CD8-positive, alpha-beta memory T cell (primary cell): ENCODE measurements at regions of chr1 and their contacts with region 1.

Region 1: DNA sequence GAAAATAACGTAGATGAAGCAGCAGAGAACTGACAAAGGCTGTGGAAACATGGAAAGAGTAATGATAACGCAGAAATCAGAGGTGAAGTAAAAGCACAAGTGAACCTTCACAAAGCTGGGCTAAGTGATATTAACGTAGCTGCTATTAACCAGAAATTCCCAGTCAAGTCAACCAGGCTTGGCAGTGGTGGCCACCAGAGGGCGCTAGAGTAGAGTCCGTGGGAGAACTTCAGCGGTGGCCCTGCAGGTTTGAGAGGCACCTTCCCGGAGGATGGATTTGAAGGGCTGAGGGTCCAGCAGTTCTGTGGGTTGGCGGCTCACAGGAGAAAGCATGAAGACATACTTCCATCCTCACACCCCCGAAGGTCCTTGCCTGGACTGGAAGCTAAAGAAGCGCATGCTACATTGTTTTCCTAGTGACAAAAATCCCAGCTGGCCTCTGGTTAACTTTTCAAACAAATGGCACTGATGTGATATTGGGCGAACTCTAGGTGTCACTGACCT is 81.7 kb upstream of the ZNF648 start:
- DNase-seq: peak; percentile 66 to 88 (median 80)
- H3K4me3 ChIP-seq: no peak overlapping the region
- H3K4me3 Mint-ChIP-seq: no peak overlapping the region
- H3K27ac ChIP-seq: no peak overlapping the region
- H3K27ac Mint-ChIP-seq: no peak overlapping the region
- H3K4me1 ChIP-seq: no peaks in the 10 kb centered on the region
- H3K4me1 Mint-ChIP-seq: peaks cover 0 to 6% (median 1%) of the 10 kb centered on the region in 3 donors
- H3K27me3 ChIP-seq: no peaks in the 10 kb centered on the region
- H3K27me3 Mint-ChIP-seq: peaks cover 8 to 26% of the 10 kb centered on the region in 2 donors

Region 2: GRCh38 chr1:182084487-182085316 is 58.5 kb before region 1 on chr1:
- CTCF ChIA-PET with region 1: interaction called, 21 read pairs
- POLR2A ChIA-PET with region 1: no interaction called
- DNase-seq: peak; percentile 48 to 74 (median 56)
- H3K4me3 ChIP-seq: no peak overlapping the region
- H3K4me3 Mint-ChIP-seq: peak overlapping the region in 2 of 7 donors; percentile 9
- H3K27ac ChIP-seq: no peak overlapping the region
- H3K27ac Mint-ChIP-seq: peak overlapping the region in 5 of 8 donors; percentile 5 to 61 (median 51)
- H3K4me1 ChIP-seq: peaks cover 38% of the 10 kb centered on the region
- H3K4me1 Mint-ChIP-seq: peaks cover 24 to 34% (median 31%) of the 10 kb centered on the region in 3 donors
- H3K27me3 ChIP-seq: no peaks in the 10 kb centered on the region
- H3K27me3 Mint-ChIP-seq: peaks cover 0 to 2% of the 10 kb centered on the region in 2 donors

Region 3: DNA sequence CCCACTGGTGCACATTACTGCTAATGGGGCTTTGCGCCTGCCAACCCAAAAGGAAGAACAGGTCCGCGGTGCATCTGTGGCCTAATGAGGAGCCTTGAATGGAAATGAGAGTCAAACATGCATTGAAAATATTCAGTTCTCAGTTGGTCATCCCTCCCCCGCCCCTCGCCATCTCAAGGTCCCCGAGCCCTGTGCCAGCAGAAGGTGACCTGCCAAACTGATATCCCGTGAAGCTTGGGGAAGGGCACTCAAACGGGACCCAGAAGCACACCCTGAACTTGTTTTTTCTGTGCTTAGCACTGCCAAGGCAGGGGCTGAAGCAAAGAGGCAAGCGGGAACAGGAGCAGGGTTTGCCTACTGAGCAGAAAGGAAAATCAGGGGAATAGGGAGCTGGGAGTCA is 13.8 kb before region 1 on chr1:
- CTCF ChIA-PET with region 1: interaction called, 12 read pairs
- POLR2A ChIA-PET with region 1: no interaction called
- DNase-seq: no peak
- H3K4me3 ChIP-seq: no peak overlapping the region
- H3K4me3 Mint-ChIP-seq: no peak overlapping the region
- H3K27ac ChIP-seq: no peak overlapping the region
- H3K27ac Mint-ChIP-seq: no peak overlapping the region
- H3K4me1 ChIP-seq: no peaks in the 10 kb centered on the region
- H3K4me1 Mint-ChIP-seq: no peaks in the 10 kb centered on the region
- H3K27me3 ChIP-seq: no peaks in the 10 kb centered on the region
- H3K27me3 Mint-ChIP-seq: peaks cover 12 to 20% of the 10 kb centered on the region in 2 donors

Region 4: DNA sequence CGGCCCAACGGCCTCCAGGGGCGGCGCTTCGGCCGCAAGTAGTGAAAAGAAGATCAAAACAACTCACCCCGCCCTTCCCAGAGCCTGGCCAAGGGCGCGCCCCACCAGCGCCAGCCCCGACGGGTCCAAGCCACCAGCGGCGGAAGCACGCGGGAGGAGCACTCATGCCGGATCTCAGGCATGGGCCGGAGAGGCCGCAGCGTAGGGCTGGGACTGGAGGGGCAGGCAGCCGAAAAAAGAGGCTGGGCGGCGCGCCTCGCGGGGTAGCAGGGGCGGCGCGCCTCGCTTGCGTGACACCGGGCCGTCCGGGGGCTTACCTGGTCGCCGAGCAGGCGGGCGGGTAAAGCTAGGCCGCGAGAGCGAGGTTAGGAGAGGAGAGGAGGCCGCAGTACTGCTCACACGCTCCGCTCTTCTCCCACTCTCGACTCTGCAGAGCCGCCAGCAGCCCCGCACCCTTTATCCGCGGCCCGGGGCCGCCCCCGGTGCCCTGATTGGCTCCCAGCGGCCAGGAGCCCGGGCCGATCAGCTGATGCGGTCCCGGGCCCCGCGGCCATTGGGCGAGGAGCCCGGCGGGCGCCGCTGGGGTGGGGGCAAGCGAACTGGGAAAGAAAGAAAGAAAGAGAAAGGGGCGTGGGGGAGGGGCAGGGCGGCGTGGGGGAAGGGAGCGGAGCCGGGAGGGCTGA is 248.3 kb after region 1 on chr1 and contains the start of gene GLUL:
- CTCF ChIA-PET with region 1: interaction called, 113 read pairs
- POLR2A ChIA-PET with region 1: interaction called, 8 read pairs
- DNase-seq: peak; percentile 28 to 67 (median 58)
- H3K4me3 ChIP-seq: peak within 1 kb of the TSS; percentile 69
- H3K4me3 Mint-ChIP-seq: peak within 1 kb of the TSS; percentile 88 to 95 (median 93)
- H3K27ac ChIP-seq: peak within 1 kb of the TSS; percentile 82
- H3K27ac Mint-ChIP-seq: peak within 1 kb of the TSS; percentile 80 to 91 (median 84)
- H3K4me1 ChIP-seq: peaks cover 13% of the 10 kb centered on the region
- H3K4me1 Mint-ChIP-seq: peaks cover 28 to 38% (median 33%) of the 10 kb centered on the region in 3 donors
- H3K27me3 ChIP-seq: no peaks in the 10 kb centered on the region
- H3K27me3 Mint-ChIP-seq: peaks cover 6 to 27% of the 10 kb centered on the region in 2 donors
- total RNA-seq, gene GLUL: 31.2 to 32.7 TPM

Region 5: GRCh38 chr1:182397771-182398393 is 254.7 kb after region 1 on chr1:
- CTCF ChIA-PET with region 1: interaction called, 113 read pairs
- POLR2A ChIA-PET with region 1: interaction called, 8 read pairs
- DNase-seq: no peak
- H3K4me3 ChIP-seq: no peak overlapping the region
- H3K4me3 Mint-ChIP-seq: no peak overlapping the region
- H3K27ac ChIP-seq: no peak overlapping the region
- H3K27ac Mint-ChIP-seq: no peak overlapping the region
- H3K4me1 ChIP-seq: peaks cover 5% of the 10 kb centered on the region
- H3K4me1 Mint-ChIP-seq: peaks cover 4 to 6% (median 4%) of the 10 kb centered on the region in 3 donors
- H3K27me3 ChIP-seq: no peaks in the 10 kb centered on the region
- H3K27me3 Mint-ChIP-seq: peaks cover 4 to 18% of the 10 kb centered on the region in 2 donors

Region 6: GRCh38 chr1:182507665-182508064 is 364.5 kb after region 1 on chr1:
- CTCF ChIA-PET with region 1: no interaction called
- POLR2A ChIA-PET with region 1: no interaction called
- DNase-seq: no peak
- H3K4me3 ChIP-seq: no peak overlapping the region
- H3K4me3 Mint-ChIP-seq: no peak overlapping the region
- H3K27ac ChIP-seq: no peak overlapping the region
- H3K27ac Mint-ChIP-seq: no peak overlapping the region
- H3K4me1 ChIP-seq: no peaks in the 10 kb centered on the region
- H3K4me1 Mint-ChIP-seq: no peaks in the 10 kb centered on the region
- H3K27me3 ChIP-seq: no peaks in the 10 kb centered on the region
- H3K27me3 Mint-ChIP-seq: peaks cover 6 to 20% of the 10 kb centered on the region in 2 donors